ENCODE measurements at regions of chr13 and their contacts with region 1.

Region 1: DNA sequence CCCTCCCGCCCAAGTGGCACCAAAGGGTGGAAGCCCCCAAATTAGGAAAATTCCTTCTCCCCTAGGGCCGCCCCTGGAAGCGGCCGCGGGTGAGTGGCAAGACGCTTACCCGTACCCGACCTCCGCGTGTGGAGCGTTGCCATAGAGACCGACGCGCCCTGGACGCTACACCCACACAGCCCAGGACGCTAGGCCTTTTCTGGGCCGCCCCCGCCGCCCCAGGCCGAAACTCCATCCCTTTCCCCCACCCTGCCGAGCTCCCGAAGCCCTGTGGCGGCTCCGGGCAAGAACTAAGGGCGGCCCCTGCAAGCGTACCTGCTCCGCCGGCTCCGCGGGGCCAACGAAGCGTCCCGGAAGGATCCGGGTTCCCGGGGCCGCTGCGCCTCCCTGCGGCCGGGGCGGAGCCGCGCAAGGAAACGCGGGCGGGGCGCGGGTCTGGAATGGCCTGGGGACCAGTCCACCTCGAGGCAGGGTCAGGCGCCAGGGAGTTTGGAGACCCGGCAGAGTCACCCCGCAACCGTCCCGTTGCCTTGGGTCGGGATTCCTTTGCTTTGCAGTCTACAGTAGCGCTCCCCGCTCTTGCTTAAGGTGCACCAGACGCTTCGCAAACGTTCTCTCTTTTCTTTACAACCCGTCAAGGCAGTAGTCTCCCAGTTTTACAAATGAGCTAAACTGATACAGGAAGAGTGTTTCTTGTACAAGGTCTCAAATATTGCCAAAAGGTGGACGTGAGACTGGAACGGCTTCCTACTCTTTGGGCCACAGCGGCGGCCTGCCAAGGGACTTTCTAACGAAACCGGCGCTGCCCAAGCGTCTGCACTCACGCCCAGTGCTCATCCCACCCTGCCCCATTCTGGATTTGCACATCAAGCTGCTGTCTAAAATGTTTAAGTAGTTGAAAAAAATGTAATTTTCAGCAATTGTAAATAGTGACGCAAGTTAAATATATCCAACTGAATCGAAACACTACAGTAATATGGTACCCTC is at the start of gene NEK5:
- DNase-seq: peak; percentile 49
- ATAC-seq: peak; percentile 93
- H3K4me3 ChIP-seq: peak within 1 kb of the TSS; percentile 63 to 78 (median 76)
- H3K27ac ChIP-seq: no peak within 1 kb of the TSS
- H3K4me1 ChIP-seq: peaks cover 14% of the 10 kb centered on the region
- H3K27me3 ChIP-seq: no peaks in the 10 kb centered on the region
- CTCF ChIP-seq: peak; percentile 96
- EP300 ChIP-seq: no peak
- POLR2A ChIP-seq: no peak
- RAD21 ChIP-seq: peak; percentile 96
- total RNA-seq, gene NEK5: 0.21 and 0.22 TPM in 2 replicates

Region 2: DNA sequence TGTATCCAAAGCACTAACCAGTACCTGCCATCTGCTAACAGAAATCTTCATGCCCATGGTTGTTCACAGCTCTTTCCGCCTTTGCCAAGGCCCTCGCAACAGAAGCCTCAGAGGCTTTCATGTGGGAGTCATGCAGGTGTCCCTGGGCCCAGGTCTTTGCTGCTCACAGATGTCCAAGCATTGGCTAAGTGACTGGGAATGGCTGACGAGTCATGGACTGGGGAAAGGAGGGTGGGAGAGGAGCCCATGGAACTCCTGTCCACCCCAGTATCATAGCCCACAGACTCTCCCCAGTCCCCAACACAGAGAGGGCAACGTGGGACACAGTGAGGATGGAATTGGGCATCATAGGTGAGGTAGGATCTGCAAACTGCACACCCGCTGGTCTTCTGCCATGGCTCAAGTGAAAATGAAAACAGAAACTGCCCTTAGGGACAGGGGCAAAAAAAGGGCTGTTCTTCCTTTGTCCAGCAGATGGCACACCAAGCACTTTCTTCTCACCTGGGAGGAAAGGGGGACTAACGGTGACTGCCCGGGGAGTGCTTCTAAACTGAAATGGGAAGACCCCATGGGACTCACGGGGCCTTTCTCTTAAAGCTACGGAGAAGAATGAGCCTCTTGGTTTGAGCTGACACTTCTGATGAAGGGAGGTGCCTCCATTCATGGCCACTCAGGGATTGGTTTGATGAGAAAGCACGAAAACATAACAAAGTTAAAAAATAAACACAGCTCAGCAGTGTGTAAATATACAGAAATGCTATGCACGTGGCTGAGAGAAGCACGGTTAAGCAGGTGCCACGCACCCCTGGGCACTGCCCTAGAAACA is 314.0 kb before region 1 on chr13:
- CTCF ChIA-PET with region 1: interaction called, 5 read pairs
- POLR2A ChIA-PET with region 1: no interaction called
- in situ Hi-C with region 1: loop called (anchors 10 kb)
- intact Hi-C with region 1: loop called (anchors 1 kb)
- DNase-seq: peak; percentile 63
- ATAC-seq: peak; percentile 94
- H3K4me3 ChIP-seq: peak overlapping the region in 2 of 3 experiments; percentile 43 to 53; a peak in 5 of 6 replicates
- H3K27ac ChIP-seq: no peak overlapping the region
- H3K4me1 ChIP-seq: peaks cover 14% of the 10 kb centered on the region
- H3K27me3 ChIP-seq: no peaks in the 10 kb centered on the region
- CTCF ChIP-seq: peak; percentile 88
- EP300 ChIP-seq: no peak
- POLR2A ChIP-seq: no peak
- RAD21 ChIP-seq: peak; percentile 71

Region 3: GRCh38 chr13:51895906-51896888 is 232.8 kb before region 1 on chr13:
- CTCF ChIA-PET with region 1: interaction called, 19 read pairs
- POLR2A ChIA-PET with region 1: no interaction called
- in situ Hi-C with region 1: loop called (anchors 5 kb)
- intact Hi-C with region 1: no loop called
- DNase-seq: peak; percentile 45
- ATAC-seq: peak; percentile 97
- H3K4me3 ChIP-seq: no peak overlapping the region
- H3K27ac ChIP-seq: no peak overlapping the region
- H3K4me1 ChIP-seq: no peaks in the 10 kb centered on the region
- H3K27me3 ChIP-seq: no peaks in the 10 kb centered on the region
- CTCF ChIP-seq: peak; percentile 72
- EP300 ChIP-seq: no peak
- POLR2A ChIP-seq: no peak
- RAD21 ChIP-seq: peak; percentile 51; the same call in 1 of the 2 replicates

Region 4: DNA sequence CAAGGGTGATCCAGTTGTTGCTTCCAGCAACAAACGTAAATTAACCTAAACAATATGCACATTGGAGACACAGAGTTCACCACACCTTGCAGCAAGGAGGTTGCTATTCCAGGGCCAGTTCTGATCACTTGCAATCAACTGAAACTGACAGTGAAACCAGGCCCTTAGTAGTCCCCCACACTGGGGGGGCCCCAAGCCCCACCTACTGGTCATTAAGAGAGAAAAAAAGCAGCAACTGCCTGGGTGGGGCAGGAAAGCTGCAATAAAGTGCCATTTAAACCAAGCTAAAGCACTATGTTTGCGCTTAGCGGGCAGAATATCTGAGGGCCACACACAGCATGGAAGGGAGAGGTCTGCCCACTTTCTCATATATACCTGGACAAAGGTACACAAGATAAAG is 169.2 kb before region 1 on chr13:
- CTCF ChIA-PET with region 1: no interaction called
- POLR2A ChIA-PET with region 1: no interaction called
- in situ Hi-C with region 1: no loop called
- intact Hi-C with region 1: loop called (anchors 5 kb)
- DNase-seq: no peak
- ATAC-seq: no peak
- H3K4me3 ChIP-seq: no peak overlapping the region
- H3K27ac ChIP-seq: no peak overlapping the region
- H3K4me1 ChIP-seq: peaks cover 10% of the 10 kb centered on the region
- H3K27me3 ChIP-seq: no peaks in the 10 kb centered on the region
- CTCF ChIP-seq: no peak
- EP300 ChIP-seq: no peak
- POLR2A ChIP-seq: no peak
- RAD21 ChIP-seq: no peak

Region 5: GRCh38 chr13:52011632-52012511 is 117.1 kb before region 1 on chr13 and contains the start of gene ALG11:
- CTCF ChIA-PET with region 1: no interaction called
- POLR2A ChIA-PET with region 1: interaction called, 4 read pairs
- in situ Hi-C with region 1: loop called (anchors 5 kb)
- intact Hi-C with region 1: no loop called
- DNase-seq: peak; percentile 97
- ATAC-seq: peak; percentile 92
- H3K4me3 ChIP-seq: peak within 1 kb of the TSS; percentile 97 to 98 (median 98)
- H3K27ac ChIP-seq: peak within 1 kb of the TSS; percentile 97
- H3K4me1 ChIP-seq: peaks cover 61% of the 10 kb centered on the region
- H3K27me3 ChIP-seq: no peaks in the 10 kb centered on the region; a peak in 1 of 5 replicates
- CTCF ChIP-seq: peak; percentile 36; the same call in 1 of the 2 replicates
- EP300 ChIP-seq: peak; percentile 25 to 89; a peak in 2 of 4 replicates
- POLR2A ChIP-seq: peak; percentile 90 to 98
- RAD21 ChIP-seq: peak; percentile 72
- total RNA-seq, gene ALG11: 25.4 and 27.9 TPM in 2 replicates

Region 6: GRCh38 chr13:52070929-52071523 is 58.0 kb before region 1 on chr13:
- CTCF ChIA-PET with region 1: interaction called, 28 read pairs
- POLR2A ChIA-PET with region 1: interaction called, 5 read pairs
- in situ Hi-C with region 1: loop called (anchors 5 kb)
- intact Hi-C with region 1: loop called (anchors 1 kb)
- DNase-seq: peak; percentile 54
- ATAC-seq: peak; percentile 92
- H3K4me3 ChIP-seq: no peak overlapping the region
- H3K27ac ChIP-seq: no peak overlapping the region
- H3K4me1 ChIP-seq: peaks cover 15% of the 10 kb centered on the region
- H3K27me3 ChIP-seq: no peaks in the 10 kb centered on the region
- CTCF ChIP-seq: peak; percentile 70
- EP300 ChIP-seq: no peak
- POLR2A ChIP-seq: no peak
- RAD21 ChIP-seq: 0 out of 2 replicates have a peak, but pooled peaks have one; percentile 8